ENCODE measurements at regions of chr4 and their contacts with region 1.

Region 1: GRCh38 chr4:110049951-110050925 is 137.6 kb downstream of the EGF start:
- DNase-seq: no peak
- H3K4me3 ChIP-seq: no peak overlapping the region
- H3K27me3 ChIP-seq: no peaks in the 10 kb centered on the region
- CTCF ChIP-seq: peak; percentile 90

Region 2: DNA sequence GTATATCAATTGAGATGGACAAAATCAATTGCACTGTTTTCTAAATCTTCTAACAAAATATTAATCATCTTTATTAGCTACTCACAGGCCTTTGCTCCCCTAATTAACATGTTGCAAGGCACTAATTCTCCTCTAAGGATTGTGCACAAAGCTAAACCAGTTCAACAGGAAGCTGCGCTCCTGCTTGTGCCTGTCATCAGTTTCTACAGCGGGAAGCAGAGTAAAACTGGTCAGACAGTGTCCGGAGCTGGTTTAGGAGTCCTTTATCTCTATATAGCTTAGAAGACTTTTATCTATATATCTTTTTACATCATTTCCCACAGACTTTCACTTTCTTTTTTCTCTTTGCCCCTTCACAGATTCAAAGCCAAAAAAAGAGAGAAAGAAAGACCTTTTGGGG is 69.1 kb after region 1 on chr4:
- CTCF ChIA-PET with region 1: interaction called, 13 read pairs
- POLR2A ChIA-PET with region 1: no interaction called
- DNase-seq: no peak
- H3K4me3 ChIP-seq: no peak overlapping the region
- H3K27me3 ChIP-seq: no peaks in the 10 kb centered on the region
- CTCF ChIP-seq: no peak

Region 3: GRCh38 chr4:110165382-110166285 is 115.4 kb after region 1 on chr4:
- CTCF ChIA-PET with region 1: interaction called, 11 read pairs
- POLR2A ChIA-PET with region 1: no interaction called
- DNase-seq: peak; percentile 19
- H3K4me3 ChIP-seq: no peak overlapping the region
- H3K27me3 ChIP-seq: no peaks in the 10 kb centered on the region
- CTCF ChIP-seq: no peak

Region 4: DNA sequence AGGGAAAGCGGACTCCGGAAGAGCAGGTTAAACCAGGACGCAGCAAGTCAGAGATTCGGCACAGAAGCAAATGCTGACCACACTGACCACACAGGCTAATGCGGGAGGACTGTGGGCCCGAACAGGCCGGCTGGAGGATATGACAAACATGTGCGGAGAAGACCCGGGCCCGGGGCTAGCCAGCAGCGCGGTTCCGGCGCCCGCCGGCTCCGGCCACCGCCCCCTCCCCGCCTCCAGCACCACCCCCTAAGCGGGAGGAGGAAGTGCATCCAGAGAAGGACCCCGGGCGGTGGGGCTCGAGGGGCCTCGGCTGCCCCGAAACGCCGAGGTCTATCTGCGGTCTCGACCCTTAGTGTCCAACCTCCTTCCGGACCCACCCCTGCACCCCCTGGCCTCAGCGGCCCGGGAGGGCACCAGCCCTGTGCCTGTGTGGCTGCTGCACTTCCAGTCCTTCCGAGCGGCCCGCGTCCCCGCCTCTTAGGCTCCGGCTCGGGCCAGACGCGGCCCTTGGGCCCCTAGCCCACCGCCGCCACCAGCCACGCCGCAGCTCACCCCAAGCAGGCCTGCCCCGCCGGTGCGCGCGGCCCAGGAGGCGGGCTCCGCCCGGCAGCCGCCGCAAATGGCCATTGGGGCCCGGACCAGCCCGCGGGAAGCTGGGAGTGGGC is 146.1 kb after region 1 on chr4:
- CTCF ChIA-PET with region 1: interaction called, 12 read pairs
- POLR2A ChIA-PET with region 1: no interaction called
- DNase-seq: no peak
- H3K4me3 ChIP-seq: peak overlapping the region; percentile 80
- H3K27me3 ChIP-seq: no peaks in the 10 kb centered on the region
- CTCF ChIP-seq: no peak

Region 5: GRCh38 chr4:110211007-110211769 is 160.9 kb after region 1 on chr4:
- CTCF ChIA-PET with region 1: interaction called, 13 read pairs
- POLR2A ChIA-PET with region 1: no interaction called
- DNase-seq: no peak
- H3K4me3 ChIP-seq: no peak overlapping the region
- H3K27me3 ChIP-seq: no peaks in the 10 kb centered on the region
- CTCF ChIP-seq: peak; percentile 83